ENCODE measurements at regions of chr3 and their contacts with region 1.

Region 1: GRCh38 chr3:34783876-34784275 is 855.4 kb upstream of the ARPP21 start:
- DNase-seq: no peak
- ATAC-seq: no peak
- H3K4me3 ChIP-seq: no peak overlapping the region
- H3K27ac ChIP-seq: no peak overlapping the region
- H3K4me1 ChIP-seq: peaks cover 1 to 11% of the 10 kb centered on the region in 2 donors
- H3K27me3 ChIP-seq: no peaks in the 10 kb centered on the region

Region 2: DNA sequence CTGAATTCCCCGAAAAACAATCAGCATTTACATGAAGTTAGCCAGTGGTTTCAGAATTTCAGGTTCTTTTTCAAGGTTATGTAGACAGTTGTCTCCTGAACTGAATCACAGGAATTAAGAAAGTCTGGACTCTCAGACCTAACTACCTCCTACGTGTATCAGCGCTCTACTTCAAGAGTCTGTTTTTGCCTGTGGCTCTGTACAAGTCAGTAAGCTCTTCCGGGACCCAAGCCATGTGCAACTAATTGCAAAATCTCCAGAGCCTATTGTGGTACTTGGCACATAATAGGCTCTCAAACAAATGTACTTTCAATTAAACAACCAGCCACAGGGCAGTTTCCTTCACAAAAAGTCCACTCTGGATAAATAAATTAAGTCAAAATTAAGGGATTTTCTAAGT is 571.2 kb before region 1 on chr3:
- intact Hi-C with region 1: loop called in 1 of 2 experiments (anchors 10 kb)
- DNase-seq: peak in 1 of 2 donors; percentile 69
- ATAC-seq: peak; percentile 67
- H3K4me3 ChIP-seq: no peak overlapping the region
- H3K27ac ChIP-seq: peak overlapping the region; percentile 23 to 93
- H3K4me1 ChIP-seq: peaks cover 11 to 20% of the 10 kb centered on the region in 2 donors
- H3K27me3 ChIP-seq: no peaks in the 10 kb centered on the region

Region 3: GRCh38 chr3:34676436-34676835 is 107.4 kb before region 1 on chr3:
- intact Hi-C with region 1: no loop called
- DNase-seq: no peak
- ATAC-seq: peak; percentile 46
- H3K4me3 ChIP-seq: no peak overlapping the region
- H3K27ac ChIP-seq: no peak overlapping the region
- H3K4me1 ChIP-seq: no peaks in the 10 kb centered on the region
- H3K27me3 ChIP-seq: no peaks in the 10 kb centered on the region

Region 4: GRCh38 chr3:34957677-34958076 is 173.8 kb after region 1 on chr3:
- intact Hi-C with region 1: loop called in 1 of 2 experiments (anchors 10 kb)
- DNase-seq: no peak
- ATAC-seq: no peak
- H3K4me3 ChIP-seq: no peak overlapping the region
- H3K27ac ChIP-seq: no peak overlapping the region
- H3K4me1 ChIP-seq: no peaks in the 10 kb centered on the region
- H3K27me3 ChIP-seq: no peaks in the 10 kb centered on the region

Region 5: DNA sequence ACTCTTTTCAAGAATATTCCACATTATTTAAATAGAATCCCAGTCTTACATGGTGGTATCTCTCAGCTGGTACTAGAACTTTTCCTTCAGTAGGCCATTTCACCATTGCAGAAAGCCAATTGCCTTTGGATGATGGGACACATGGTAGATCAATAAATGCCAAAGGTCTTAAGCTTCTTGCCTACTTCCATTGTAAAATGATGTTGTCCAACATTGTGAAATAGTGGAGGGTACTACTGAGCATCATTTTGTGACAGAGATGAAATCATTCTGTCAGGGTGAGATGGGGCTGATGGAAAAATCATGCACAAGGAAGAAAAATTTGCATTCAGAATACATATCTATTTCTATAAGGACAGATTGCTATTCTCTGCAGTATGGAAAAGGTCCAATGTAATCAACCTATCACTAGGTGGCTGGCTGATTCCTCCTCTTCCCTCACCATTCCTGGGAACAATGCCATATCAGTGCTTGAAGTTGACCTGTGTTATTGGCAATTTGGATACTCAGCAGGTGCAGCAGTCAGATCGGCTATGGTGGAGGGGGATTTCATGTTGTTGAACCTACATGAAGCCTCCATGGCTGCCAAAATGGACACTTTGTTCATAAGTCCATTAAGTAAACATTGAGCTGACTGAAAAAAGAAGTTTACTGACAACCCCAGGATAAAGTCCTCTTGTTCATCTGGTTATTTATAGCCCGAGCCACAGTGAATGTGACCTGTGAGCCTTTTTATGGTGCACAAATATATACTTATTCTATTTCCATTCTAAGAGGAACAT is 258.5 kb after region 1 on chr3:
- intact Hi-C with region 1: no loop called
- DNase-seq: no peak
- ATAC-seq: no peak
- H3K4me3 ChIP-seq: no peak overlapping the region
- H3K27ac ChIP-seq: no peak overlapping the region
- H3K4me1 ChIP-seq: no peaks in the 10 kb centered on the region
- H3K27me3 ChIP-seq: no peaks in the 10 kb centered on the region

Measured in aorta (tissue), 5 donors.